PC-3 (cell line): ENCODE measurements at regions of chr17 and their contacts with region 1.

Region 1: DNA sequence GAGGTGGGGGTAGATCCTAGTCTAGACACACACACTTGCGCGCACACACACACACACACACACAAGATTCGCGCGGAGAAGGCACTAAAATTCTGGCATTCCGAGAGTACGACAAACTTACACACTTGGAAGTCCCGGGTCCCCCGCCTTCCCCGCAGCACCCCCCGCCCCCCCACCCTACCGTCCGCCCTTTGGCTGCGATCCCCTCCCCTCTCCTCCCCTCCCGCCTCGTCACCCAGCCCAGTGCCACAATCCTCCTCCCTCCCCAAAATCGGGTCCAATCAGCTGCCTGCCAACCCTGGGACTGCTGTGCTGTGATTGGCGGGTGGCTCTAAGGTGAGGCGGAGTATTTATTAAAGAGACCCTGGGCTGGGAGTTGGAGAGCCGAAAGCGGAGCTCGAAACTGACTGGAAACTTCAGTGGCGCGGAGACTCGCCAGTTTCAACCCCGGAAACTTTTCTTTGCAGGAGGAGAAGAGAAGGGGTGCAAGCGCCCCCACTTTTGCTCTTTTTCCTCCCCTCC is at the start of gene SOX9:
- DNase-seq: peak; percentile 99
- ATAC-seq: peak; percentile 76
- H3K4me3 ChIP-seq: peak within 1 kb of the TSS; percentile 85
- H3K27ac ChIP-seq: peak within 1 kb of the TSS; percentile 83
- H3K4me1 ChIP-seq: peaks cover 37% of the 10 kb centered on the region
- H3K27me3 ChIP-seq: no peaks in the 10 kb centered on the region
- CTCF ChIP-seq: no peak
- total RNA-seq, gene SOX9: 119 and 151 TPM in 2 replicates

Region 2: DNA sequence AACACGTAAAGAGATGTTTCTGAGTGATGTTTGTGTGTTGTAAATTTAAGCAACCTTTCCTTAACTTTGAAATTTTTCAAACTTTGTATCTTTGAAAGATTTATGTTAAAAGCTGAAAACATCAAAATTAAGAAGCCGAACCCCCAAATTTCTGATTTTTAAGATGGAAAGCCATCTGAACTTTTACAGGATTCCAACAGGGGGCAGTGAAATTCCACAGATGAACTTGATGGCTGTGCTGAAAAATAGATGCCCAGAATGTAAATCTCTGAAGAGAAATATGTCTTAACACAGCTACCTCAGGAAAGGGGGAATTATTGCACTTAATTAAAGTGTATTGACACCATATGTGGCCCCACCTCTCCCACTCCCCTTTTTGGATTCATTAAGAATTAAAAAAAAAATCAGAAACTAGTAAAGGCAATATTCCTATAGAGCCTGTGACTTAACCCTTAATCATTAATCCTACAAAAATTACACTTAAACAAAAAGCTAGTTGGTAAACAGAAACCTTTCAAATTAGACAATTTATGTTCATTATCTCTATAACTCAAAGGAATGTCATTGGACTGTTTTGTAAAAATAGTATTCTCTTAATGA is 1353.5 kb before region 1 on chr17:
- CTCF ChIA-PET with region 1: no interaction called
- POLR2A ChIA-PET with region 1: no interaction called
- intact Hi-C with region 1: loop called (anchors 2 kb)
- DNase-seq: peak; percentile 57
- ATAC-seq: no peak
- H3K4me3 ChIP-seq: no peak overlapping the region
- H3K27ac ChIP-seq: no peak overlapping the region
- H3K4me1 ChIP-seq: no peaks in the 10 kb centered on the region
- H3K27me3 ChIP-seq: no peaks in the 10 kb centered on the region
- CTCF ChIP-seq: peak; percentile 96

Region 3: DNA sequence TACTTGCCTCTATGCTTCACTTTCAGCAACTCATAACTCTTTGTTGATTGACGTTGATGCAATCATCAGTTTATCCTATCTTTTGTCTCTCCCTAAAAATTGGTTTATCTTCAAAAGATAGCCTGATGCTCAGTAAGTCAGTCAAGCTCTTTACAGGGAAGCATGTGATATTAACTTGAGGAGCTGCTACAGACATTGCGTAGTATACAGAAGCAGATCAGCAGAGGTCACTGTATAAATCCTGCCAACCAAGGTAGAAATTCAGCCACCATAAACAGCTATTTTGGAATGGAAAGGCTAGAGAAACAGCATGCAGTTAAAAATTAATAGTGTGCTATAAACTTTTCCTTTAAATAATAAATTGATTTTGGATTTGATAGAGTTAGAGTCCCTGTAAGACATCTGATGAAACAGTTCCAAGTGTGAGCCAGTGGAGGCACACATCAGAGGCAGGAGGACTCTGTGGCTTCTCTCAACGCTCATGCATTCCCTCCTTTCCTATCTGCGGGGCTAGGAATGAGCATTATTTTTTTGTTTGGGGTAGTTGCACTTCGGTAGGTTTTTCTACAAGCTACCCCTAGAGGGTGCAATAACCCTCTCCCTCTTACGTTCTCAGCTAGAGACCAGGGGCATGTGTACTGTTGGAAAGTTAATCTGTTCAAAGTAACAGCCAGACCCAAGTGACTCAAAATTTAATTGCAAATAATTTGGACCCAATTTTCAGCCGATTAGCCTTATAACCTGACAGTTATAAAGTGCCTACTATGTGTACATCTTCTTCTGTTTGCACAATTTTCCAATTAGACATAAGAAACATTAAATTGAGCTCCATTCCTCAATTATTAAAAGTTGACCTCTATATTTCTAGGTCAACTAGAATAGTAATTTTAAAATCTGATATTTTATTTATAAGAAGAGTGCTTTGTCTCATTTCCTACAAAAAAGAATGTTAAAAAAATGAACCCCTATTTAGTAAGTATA is 647.6 kb before region 1 on chr17:
- CTCF ChIA-PET with region 1: interaction called, 6 read pairs
- POLR2A ChIA-PET with region 1: no interaction called
- intact Hi-C with region 1: loop called (anchors 1 kb)
- DNase-seq: peak; percentile 87
- ATAC-seq: peak; percentile 97
- H3K4me3 ChIP-seq: no peak overlapping the region
- H3K27ac ChIP-seq: no peak overlapping the region
- H3K4me1 ChIP-seq: peaks cover 13% of the 10 kb centered on the region
- H3K27me3 ChIP-seq: no peaks in the 10 kb centered on the region
- CTCF ChIP-seq: peak; percentile 95

Region 4: DNA sequence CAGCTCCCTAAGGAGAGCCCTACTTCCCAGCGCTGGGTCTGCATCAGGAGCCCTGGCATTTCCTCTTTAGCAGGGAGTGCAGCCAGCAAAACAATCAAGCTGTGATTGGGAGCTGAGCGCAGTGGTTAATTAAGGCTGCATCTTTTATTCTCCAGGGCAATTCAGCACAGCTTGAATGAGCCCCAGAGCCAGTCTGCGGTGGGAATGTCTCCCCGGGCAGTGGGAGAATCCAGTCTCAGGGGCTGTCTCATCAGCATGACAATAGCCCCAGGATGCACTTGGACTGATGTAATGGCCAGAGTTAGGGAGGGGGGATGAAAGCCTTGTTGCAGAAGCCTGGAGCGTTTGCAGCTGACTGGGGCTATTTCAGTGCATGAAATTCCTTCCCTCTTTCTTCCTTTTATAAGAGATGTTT is 292.5 kb before region 1 on chr17:
- CTCF ChIA-PET with region 1: no interaction called
- POLR2A ChIA-PET with region 1: no interaction called
- intact Hi-C with region 1: loop called (anchors 10 kb)
- DNase-seq: no peak
- ATAC-seq: no peak
- H3K4me3 ChIP-seq: no peak overlapping the region
- H3K27ac ChIP-seq: no peak overlapping the region
- H3K4me1 ChIP-seq: no peaks in the 10 kb centered on the region
- H3K27me3 ChIP-seq: no peaks in the 10 kb centered on the region
- CTCF ChIP-seq: no peak

Region 5: GRCh38 chr17:71976011-71976649 is 144.6 kb before region 1 on chr17:
- CTCF ChIA-PET with region 1: no interaction called
- POLR2A ChIA-PET with region 1: no interaction called
- intact Hi-C with region 1: loop called (anchors 1 kb)
- DNase-seq: peak; percentile 99
- ATAC-seq: peak; percentile 91
- H3K4me3 ChIP-seq: peak overlapping the region; percentile 45; the same call in 1 of the 2 replicates
- H3K27ac ChIP-seq: peak overlapping the region; percentile 95
- H3K4me1 ChIP-seq: peaks cover 26% of the 10 kb centered on the region
- H3K27me3 ChIP-seq: no peaks in the 10 kb centered on the region
- CTCF ChIP-seq: no peak

Region 6: GRCh38 chr17:72397687-72398086 is 277.0 kb after region 1 on chr17:
- CTCF ChIA-PET with region 1: no interaction called
- POLR2A ChIA-PET with region 1: interaction called, 21 read pairs
- intact Hi-C with region 1: loop called (anchors 2 kb)
- DNase-seq: peak; percentile 94
- ATAC-seq: peak; percentile 27
- H3K4me3 ChIP-seq: peak overlapping the region; percentile 3; the same call in 1 of the 2 replicates
- H3K27ac ChIP-seq: peak overlapping the region; percentile 97
- H3K4me1 ChIP-seq: peaks cover 76% of the 10 kb centered on the region
- H3K27me3 ChIP-seq: no peaks in the 10 kb centered on the region
- CTCF ChIP-seq: no peak